WTC11 (cell line): ENCODE measurements at regions of chr11 and their contacts with region 1.

Region 1: GRCh38 chr11:65888163-65888814 is at the start of gene FIBP:
- DNase-seq: peak; percentile 98
- ATAC-seq: peak; percentile 64
- H3K4me3 Mint-ChIP-seq: peak within 1 kb of the TSS; percentile 97
- H3K27ac Mint-ChIP-seq: peak within 1 kb of the TSS; percentile 98
- H3K4me1 Mint-ChIP-seq: peaks cover 44% of the 10 kb centered on the region
- H3K27me3 Mint-ChIP-seq: peaks cover 15% of the 10 kb centered on the region
- CTCF ChIP-seq: peak; percentile 57
- total RNA-seq, gene FIBP: 91.6 to 93.1 TPM (median 92.2 TPM) in 3 replicates

Region 2: DNA sequence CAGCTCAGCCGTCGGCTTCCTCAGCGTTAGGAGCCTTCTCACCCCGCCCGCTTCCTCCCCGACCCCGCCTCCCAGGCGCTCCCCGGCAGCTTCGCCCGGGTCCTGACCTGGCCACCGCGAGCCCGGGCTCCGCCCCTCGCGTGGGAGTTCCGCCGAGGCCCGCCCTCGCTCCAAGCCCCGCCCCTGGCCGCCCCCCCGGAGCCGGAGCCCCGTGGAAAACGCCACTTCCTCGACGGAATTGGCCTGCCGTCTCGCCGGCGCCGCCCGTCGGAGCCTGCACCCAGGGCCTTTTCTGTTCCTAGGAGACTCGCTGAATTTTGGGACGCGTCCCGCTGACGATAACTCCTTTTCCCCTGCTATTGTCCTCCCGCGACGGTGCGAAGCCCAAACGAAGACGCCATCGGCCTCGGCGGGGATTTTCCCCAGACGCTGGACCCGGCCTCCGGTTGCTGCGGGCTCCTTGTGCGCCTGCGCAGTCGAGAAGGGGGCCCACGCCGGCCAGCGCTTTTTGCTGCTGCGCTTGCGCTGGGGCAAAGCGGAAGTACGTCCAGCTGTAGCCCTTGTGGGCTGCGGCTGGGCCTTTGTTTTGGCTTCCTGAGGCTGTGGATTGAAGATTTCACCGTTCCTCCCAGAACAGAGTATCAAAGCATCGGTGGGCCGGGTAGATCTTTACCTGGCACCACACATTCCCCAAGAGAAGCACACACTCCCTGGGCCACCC is 235.6 kb before region 1 on chr11:
- CTCF ChIA-PET with region 1: interaction called, 11 read pairs
- POLR2A ChIA-PET with region 1: no interaction called
- DNase-seq: peak; percentile 90
- ATAC-seq: peak; percentile 84
- H3K4me3 Mint-ChIP-seq: peak overlapping the region; percentile 80
- H3K27ac Mint-ChIP-seq: peak overlapping the region; percentile 96
- H3K4me1 Mint-ChIP-seq: peaks cover 21% of the 10 kb centered on the region
- H3K27me3 Mint-ChIP-seq: peaks cover 3% of the 10 kb centered on the region; the same call in 1 of the 2 replicates
- CTCF ChIP-seq: no peak

Region 3: GRCh38 chr11:65779851-65780577 is 108.3 kb before region 1 on chr11:
- CTCF ChIA-PET with region 1: interaction called, 35 read pairs
- POLR2A ChIA-PET with region 1: no interaction called
- DNase-seq: peak; percentile 97
- ATAC-seq: peak; percentile 77
- H3K4me3 Mint-ChIP-seq: peak overlapping the region; percentile 86
- H3K27ac Mint-ChIP-seq: peak overlapping the region; percentile 68; the same call in 1 of the 2 replicates
- H3K4me1 Mint-ChIP-seq: peaks cover 19% of the 10 kb centered on the region
- H3K27me3 Mint-ChIP-seq: peaks cover 32% of the 10 kb centered on the region
- CTCF ChIP-seq: peak; percentile 96

Region 4: DNA sequence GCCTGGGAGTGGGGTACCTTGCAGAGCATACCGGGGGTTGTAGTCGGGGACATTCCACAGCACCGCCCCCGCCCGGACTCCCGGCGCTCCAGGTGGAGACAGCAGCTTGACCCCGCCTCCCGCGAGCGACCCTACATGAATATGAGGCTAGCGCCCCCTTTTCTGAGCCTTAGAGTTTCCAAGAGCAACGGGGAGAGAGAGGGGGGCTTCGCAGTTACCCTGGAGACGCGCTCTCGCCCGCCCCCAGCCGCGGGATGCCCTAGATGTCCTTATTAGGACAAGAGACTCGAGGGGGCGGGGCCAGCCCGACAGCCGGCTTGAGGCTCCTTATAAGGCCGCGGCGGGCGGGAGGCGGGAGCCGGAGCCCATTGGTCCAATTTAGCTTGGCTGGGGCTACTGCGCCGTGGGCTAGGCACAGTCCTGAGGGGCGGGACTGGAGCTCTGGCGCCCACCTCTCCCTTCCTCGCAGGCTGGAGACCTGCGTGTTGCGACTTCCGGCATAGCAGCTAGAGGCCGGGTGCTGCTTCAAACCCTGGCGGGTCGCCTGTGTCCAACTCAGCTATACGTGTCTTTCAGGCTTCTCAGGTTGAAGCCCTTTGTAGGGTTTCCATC is 29.0 kb before region 1 on chr11:
- CTCF ChIA-PET with region 1: interaction called, 539 read pairs
- POLR2A ChIA-PET with region 1: interaction called, 90 read pairs
- DNase-seq: peak; percentile 100
- ATAC-seq: peak; percentile 67
- H3K4me3 Mint-ChIP-seq: peak overlapping the region; percentile 90
- H3K27ac Mint-ChIP-seq: peak overlapping the region; percentile 100
- H3K4me1 Mint-ChIP-seq: peaks cover 23% of the 10 kb centered on the region
- H3K27me3 Mint-ChIP-seq: no peaks in the 10 kb centered on the region
- CTCF ChIP-seq: no peak

Region 5: DNA sequence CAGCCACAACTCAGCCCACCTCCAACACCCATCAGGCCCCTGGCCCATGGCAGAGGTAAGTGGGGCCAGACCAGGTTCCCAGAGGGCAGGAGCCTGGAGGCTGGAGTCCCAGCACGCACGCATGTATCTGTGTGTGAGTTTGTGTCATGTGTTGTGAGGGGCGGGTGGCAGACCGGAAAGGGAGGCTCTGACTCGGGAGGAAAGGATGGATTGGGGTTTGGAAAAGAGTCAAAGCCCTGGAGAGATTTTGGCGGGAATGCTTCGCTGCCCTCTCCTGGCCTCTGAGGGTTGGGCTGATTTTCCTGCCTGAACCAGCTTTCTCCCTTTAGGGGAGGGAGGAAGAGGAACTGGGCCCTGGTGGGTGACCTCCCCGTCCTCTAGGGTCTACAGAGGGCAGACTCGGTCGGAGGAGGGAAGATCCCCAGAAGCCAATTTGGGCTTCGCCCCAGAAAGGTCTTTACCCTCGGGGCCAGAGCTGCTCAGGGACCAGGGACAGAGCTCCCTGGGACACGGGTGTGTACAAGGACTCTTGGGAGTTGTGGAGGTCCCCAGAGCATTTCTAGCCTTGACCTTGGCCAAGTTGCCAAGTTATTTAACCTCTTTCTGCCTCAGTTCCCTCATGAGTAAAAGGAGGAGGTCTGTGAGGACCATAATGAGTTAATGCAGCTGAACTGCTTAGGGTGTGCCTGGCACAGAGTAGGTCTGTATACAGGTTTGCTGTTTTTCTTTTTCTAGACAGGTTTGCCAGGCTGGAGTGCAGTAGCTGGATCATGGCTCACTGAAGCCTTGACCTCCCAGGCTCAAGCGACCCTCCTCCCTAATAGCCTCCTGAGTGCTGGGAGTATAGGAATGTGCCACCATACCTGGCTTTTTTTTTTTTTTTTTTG is 23.6 kb after region 1 on chr11:
- CTCF ChIA-PET with region 1: interaction called, 41 read pairs
- POLR2A ChIA-PET with region 1: interaction called, 8 read pairs
- DNase-seq: peak; percentile 69
- ATAC-seq: peak; percentile 81
- H3K4me3 Mint-ChIP-seq: no peak overlapping the region
- H3K27ac Mint-ChIP-seq: no peak overlapping the region
- H3K4me1 Mint-ChIP-seq: peaks cover 17% of the 10 kb centered on the region
- H3K27me3 Mint-ChIP-seq: peaks cover 27% of the 10 kb centered on the region
- CTCF ChIP-seq: no peak

Region 6: GRCh38 chr11:65988791-65989592 is 100.7 kb after region 1 on chr11:
- CTCF ChIA-PET with region 1: interaction called, 27 read pairs
- POLR2A ChIA-PET with region 1: interaction called, 3 read pairs
- DNase-seq: peak; percentile 92
- ATAC-seq: peak; percentile 99
- H3K4me3 Mint-ChIP-seq: no peak overlapping the region
- H3K27ac Mint-ChIP-seq: no peak overlapping the region
- H3K4me1 Mint-ChIP-seq: no peaks in the 10 kb centered on the region
- H3K27me3 Mint-ChIP-seq: no peaks in the 10 kb centered on the region
- CTCF ChIP-seq: peak; percentile 70

Region 7: DNA sequence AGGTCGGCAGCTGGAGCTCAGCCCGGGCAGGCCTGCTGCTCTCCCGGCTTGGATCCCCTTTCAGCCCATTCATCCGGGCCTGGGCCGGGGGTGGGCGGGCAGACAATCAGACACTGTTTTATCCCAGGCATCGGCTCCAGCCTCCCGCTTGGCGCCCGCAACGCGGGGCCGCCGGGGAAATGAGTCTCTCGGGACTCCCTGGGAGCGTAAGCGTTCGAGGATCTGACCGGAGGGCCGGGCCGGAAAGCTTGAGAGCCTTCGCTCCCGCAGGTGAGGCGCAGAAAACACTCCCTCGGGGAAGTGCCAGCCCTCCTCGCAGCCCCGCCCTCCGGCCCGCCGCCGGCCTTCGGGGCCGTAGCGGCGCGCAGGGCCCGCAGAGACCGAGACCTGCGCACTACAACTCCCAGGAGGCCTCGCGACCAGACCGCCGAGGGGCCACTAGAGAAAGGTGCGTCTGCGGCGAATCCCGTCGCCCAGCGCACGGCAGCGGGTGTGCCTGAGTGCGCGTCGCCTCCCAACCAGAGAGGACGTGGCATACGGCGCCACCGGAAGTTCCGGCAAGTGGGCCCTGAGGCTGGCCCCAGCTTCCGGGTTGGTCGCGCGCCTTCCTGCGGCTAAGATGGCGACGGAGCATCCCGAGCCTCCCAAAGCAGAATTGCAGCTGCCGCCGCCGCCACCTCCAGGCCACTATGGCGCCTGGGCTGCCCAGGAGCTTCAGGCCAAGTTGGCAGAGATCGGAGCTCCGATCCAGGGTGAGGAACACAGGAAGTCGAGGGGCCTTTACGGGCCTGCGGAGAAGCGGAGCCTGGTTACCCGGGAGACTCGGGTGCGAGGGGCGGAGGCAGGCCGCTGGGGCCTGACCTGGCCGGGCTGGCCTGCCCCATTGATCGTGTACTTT is 163.7 kb after region 1 on chr11 and contains the start of gene SF3B2:
- CTCF ChIA-PET with region 1: interaction called, 14 read pairs
- POLR2A ChIA-PET with region 1: interaction called, 6 read pairs
- DNase-seq: peak; percentile 97
- ATAC-seq: peak; percentile 95
- H3K4me3 Mint-ChIP-seq: peak within 1 kb of the TSS; percentile 100
- H3K27ac Mint-ChIP-seq: peak within 1 kb of the TSS; percentile 98
- H3K4me1 Mint-ChIP-seq: peaks cover 35% of the 10 kb centered on the region
- H3K27me3 Mint-ChIP-seq: no peaks in the 10 kb centered on the region
- CTCF ChIP-seq: no peak
- total RNA-seq, gene SF3B2: 235 to 295 TPM (median 251 TPM) in 3 replicates